Psoas muscle (tissue), 8 donors: ENCODE measurements at regions of chr17 and their contacts with region 1.

Region 1: GRCh38 chr17:82668631-82669099 is 20.4 kb upstream of the WDR45B start:
- DNase-seq: peak; percentile 61 to 84
- ATAC-seq: peak; percentile 90 to 95 (median 92)
- H3K4me3 ChIP-seq: peak overlapping the region; percentile 22
- H3K27ac ChIP-seq: peak overlapping the region; percentile 67
- H3K4me1 ChIP-seq: peaks cover 8% of the 10 kb centered on the region
- H3K27me3 ChIP-seq: no peaks in the 10 kb centered on the region
- CTCF ChIP-seq: peak; percentile 68

Region 2: DNA sequence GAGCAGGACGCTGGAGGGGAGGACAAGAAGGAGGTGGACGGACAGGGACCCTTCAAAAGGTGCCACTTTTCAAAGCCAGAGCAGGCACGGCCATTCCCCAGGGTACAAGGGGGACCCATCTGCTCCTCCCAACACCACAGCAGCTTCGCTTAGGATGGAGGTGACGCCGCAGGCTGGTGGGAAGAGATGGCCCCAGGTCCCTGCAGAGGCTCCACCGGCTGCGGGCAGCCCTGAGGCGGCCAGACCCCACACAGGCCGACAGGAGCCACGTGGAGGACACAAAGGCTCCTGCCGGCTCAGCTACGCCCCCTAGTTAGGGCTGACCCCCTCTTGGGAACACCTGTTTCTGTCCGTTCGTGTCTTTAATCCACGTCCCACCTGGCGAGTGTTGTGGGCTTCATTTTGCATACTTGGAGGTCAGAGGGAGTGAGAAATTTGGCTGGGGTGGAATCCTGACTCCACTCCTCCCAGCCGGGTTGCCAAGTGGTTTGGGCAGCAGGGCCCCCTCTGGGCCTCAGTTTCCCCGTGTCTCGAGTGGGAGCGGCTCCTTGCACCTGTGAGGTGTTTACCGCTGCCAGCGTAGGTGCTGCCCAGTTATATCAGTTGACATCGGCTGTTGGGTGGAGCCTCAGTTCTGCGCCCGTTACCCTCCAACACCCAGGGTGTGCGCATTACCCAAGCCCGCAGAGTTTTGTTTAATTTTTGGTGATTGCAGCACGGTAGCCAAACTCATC is 42.0 kb after region 1 on chr17:
- intact Hi-C with region 1: loop called in 1 of 2 experiments (anchors 5 kb)
- DNase-seq: no peak
- ATAC-seq: no peak
- H3K4me3 ChIP-seq: no peak overlapping the region
- H3K27ac ChIP-seq: peak overlapping the region; percentile 60
- H3K4me1 ChIP-seq: peaks cover 17% of the 10 kb centered on the region
- H3K27me3 ChIP-seq: no peaks in the 10 kb centered on the region
- CTCF ChIP-seq: no peak

Region 3: DNA sequence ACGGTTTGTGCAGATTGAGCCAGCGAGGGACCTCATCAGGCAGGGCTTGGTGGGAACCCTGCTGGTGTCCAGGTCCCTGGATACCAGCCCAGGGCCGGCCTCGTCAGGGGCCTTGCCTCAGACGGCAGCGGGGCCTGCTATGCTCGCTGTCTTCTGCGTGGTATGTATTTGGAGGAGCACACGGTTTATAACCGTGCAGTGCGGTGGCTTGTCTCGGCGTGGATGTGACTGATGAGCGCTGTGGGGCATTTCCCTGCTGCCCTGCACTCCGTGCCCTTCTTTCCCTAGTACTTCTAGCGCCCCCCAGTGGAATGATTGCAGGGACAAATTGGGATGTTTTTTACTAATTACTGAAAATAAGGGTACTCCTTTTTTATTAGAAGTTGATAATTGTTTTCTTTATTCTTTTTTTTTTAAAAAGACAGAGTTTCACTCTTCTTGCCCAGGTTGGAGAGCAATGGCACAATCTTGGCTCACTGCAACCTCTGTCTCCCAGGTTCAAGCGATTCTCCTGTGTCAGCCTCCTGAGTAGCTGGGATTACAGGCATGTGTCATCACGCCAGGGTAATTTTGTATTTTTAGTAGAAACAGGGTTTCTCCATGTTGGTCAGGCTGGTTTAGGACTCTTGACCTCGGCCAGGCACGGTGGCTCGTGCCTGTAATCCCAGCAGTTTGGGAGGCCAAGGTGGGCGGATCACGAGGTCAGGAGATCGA is 98.5 kb after region 1 on chr17:
- intact Hi-C with region 1: loop called in 1 of 2 experiments (anchors 5 kb)
- DNase-seq: peak in 1 of 2 donors; percentile 48
- ATAC-seq: peak in 2 of 4 donors; percentile 72 to 75
- H3K4me3 ChIP-seq: no peak overlapping the region
- H3K27ac ChIP-seq: no peak overlapping the region
- H3K4me1 ChIP-seq: no peaks in the 10 kb centered on the region
- H3K27me3 ChIP-seq: no peaks in the 10 kb centered on the region
- CTCF ChIP-seq: peak; percentile 54

Region 4: GRCh38 chr17:82775001-82775823 is 106.5 kb after region 1 on chr17:
- intact Hi-C with region 1: loop called in 1 of 2 experiments (anchors 2 kb)
- DNase-seq: peak; percentile 71 to 84
- ATAC-seq: peak; percentile 65 to 85 (median 72)
- H3K4me3 ChIP-seq: peak overlapping the region; percentile 52
- H3K27ac ChIP-seq: no peak overlapping the region
- H3K4me1 ChIP-seq: no peaks in the 10 kb centered on the region
- H3K27me3 ChIP-seq: no peaks in the 10 kb centered on the region
- CTCF ChIP-seq: peak; percentile 86

Region 5: DNA sequence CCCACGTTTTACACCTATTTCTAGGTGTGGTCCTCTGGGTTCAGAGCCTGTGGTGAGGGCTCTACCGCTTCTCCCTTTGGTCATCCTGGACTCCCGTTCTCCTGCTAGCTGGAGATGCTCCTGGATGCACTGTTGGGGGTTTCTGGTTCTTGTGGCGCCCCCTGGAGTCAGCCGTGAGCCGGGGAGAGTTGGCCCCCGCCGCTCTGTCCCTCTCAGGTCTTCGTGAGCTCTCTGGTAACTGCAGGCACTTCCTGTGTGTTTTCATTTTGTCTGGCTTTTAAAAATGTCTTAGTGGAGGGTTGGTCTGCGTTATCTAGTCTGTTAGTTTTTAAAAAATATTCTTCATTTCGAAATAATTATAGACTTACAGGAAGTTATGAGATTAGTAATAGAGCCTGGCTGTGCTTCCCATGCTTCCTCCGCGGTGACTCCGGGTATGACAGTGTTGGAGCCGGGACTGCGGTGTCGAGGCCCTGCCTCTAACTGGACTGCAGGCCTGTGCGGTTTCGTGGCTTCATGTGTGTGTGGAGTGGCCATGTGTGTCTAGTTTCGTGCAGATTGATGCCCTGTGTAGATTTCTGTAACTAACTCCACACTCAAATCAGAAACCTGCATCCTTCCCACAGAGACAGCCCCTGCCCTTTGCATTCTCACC is 249.2 kb after region 1 on chr17:
- intact Hi-C with region 1: loop called (anchors 10 kb)
- DNase-seq: no peak
- ATAC-seq: no peak
- H3K4me3 ChIP-seq: no peak overlapping the region
- H3K27ac ChIP-seq: no peak overlapping the region
- H3K4me1 ChIP-seq: no peaks in the 10 kb centered on the region
- H3K27me3 ChIP-seq: no peaks in the 10 kb centered on the region
- CTCF ChIP-seq: peak; percentile 43

Region 6: DNA sequence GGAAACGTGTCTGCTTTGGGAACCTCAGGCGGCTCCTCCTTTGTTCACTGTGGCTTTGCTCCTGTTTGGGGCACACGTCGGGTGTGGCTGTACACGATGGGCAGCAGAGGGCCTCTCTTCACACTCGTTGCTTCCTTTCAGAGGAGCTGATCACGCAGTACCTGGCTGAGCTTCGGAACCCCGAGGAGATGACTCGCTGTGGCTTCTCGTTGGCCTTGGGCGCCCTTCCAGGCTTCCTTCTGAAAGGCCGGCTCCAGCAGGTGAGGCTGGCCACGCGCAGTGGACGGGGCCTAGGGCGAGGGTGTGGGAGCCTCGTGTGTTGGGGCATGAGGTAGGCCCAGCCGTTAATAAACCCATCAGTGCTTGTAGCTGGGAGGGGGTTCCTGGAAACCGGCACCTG is 256.1 kb after region 1 on chr17:
- intact Hi-C with region 1: loop called (anchors 10 kb)
- DNase-seq: peak; percentile 10 to 26
- ATAC-seq: no peak
- H3K4me3 ChIP-seq: no peak overlapping the region
- H3K27ac ChIP-seq: no peak overlapping the region
- H3K4me1 ChIP-seq: no peaks in the 10 kb centered on the region
- H3K27me3 ChIP-seq: no peaks in the 10 kb centered on the region
- CTCF ChIP-seq: no peak